Cardiac septum (tissue), 1 donor: ENCODE measurements at regions of chr14 and their contacts with region 1.

Region 1: DNA sequence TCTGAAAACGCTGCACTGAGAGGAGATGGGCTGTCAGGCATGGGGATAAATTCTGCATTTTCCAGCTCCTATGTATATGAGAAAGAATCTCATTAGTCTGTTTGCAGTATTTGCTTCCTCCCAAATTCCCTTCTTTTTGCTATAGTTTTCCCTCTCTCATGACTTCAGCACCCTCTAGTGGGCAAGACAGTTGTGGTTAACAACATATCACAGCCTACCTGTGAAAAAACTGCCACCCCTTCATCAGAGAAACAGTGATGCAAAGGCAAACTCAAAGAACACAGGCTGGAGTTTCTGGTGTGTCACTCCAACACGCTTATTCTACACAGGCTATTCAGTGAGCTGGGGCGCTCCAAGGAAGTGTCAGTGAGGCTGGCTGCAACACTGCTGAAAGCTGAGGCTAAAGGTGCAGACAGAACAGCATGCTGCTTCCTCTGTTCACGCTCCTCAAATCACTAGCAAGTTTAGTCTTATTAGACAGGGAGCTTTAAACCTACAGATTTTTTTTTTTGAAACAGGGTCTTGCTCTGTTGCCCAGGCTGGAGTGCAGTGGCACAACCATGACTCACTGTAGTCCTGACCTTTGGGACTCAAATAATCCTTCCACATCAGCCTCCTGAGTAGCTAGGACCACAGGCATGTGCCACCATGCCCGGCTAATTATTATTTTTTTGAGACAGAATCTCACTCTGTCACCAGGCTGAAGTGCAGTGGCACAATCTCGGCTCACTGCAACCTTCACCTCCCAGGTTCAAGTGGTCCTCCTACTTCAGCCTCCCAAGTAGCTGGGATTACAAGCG is 19.3 kb downstream of the ZC2HC1C start:
- DNase-seq: no peak

Region 2: GRCh38 chr14:74860906-74861733 is 227.7 kb before region 1 on chr14:
- intact Hi-C with region 1: loop called (anchors 2 kb)
- DNase-seq: peak; percentile 94

Region 3: DNA sequence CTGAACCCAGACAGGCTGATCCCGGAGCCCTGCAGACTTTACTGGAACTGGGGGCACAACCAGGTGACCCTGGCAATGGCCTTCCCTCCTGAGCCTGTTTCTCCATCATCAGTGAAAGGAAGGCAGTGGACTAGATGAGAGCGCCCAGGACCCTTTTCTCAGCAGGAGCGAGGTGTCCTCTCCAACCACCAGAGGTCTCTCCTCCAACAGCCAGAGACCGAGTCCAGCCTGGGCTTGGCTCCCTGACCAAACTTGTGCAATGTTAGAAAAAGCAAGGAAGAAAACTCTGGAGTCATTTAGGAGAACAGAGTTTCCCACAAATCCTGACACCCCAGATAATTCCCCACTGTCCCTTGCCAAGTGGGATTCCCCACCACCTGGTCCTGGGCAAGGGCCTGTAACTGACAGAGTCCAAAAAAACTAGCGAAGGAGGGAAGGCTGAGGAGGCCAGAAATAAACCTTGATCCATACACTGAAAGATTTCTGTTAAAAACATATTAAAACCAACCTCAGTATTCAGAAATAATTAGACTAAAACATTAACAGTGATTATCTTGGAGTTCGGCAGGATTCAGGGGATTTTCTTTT is 174.7 kb before region 1 on chr14:
- intact Hi-C with region 1: loop called (anchors 2 kb)
- DNase-seq: peak; percentile 81

Region 4: GRCh38 chr14:75011356-75011994 is 77.3 kb before region 1 on chr14:
- intact Hi-C with region 1: no loop called
- DNase-seq: no peak